ENCODE measurements at regions of chr6 and their contacts with region 1.

Region 1: DNA sequence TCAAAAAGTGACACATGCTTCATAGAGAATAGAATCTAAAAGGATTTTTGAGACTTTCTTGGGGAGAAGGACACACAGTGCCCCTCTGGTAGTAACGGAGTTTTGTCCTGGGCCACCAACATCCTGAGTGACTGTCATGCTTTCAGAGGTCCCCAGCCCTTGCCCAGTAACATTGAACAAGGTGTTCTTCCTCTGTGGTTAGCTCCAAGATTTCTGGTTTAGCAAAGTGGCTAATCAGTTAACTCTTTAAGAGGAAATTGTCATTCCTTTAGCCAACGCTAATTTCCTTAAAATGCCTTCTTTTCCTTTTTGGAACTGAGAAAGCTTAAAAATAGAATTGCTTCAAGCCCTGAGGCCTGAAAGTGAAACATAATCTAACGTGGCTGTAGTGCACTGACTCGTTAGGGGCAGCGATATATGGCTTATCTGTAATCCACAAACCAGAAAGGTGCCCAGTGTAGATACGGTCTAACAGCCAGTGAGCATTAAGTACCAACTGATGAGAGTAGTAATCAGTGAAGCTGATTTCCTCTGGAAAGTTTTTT is 7.8 kb downstream of the E2F3 start:
- DNase-seq: peak; percentile 75
- ATAC-seq: peak; percentile 92
- H3K4me3 ChIP-seq: peak overlapping the region; percentile 56
- H3K27ac ChIP-seq: peak overlapping the region; percentile 82
- H3K4me1 ChIP-seq: peaks cover 29% of the 10 kb centered on the region
- H3K27me3 ChIP-seq: no peaks in the 10 kb centered on the region
- CTCF ChIP-seq: 0 out of 6 replicates have a peak, but pooled peaks of 1 of the 3 experiments have one; percentile 3
- EP300 ChIP-seq: 0 out of 4 replicates have a peak, but pooled peaks of 1 of the 2 experiments have one; percentile 41
- POLR2A ChIP-seq: no peak
- RAD21 ChIP-seq: no peak

Region 2: GRCh38 chr6:20279608-20280287 is 129.8 kb before region 1 on chr6:
- CTCF ChIA-PET with region 1: no interaction called
- POLR2A ChIA-PET with region 1: no interaction called
- RAD21 ChIA-PET with region 1: no interaction called
- SMC1A ChIA-PET with region 1: no interaction called
- in situ Hi-C with region 1: no loop called
- intact Hi-C with region 1: no loop called
- DNase-seq: no peak
- ATAC-seq: no peak
- H3K4me3 ChIP-seq: no peak overlapping the region
- H3K27ac ChIP-seq: no peak overlapping the region
- H3K4me1 ChIP-seq: no peaks in the 10 kb centered on the region
- H3K27me3 ChIP-seq: no peaks in the 10 kb centered on the region
- CTCF ChIP-seq: no peak
- EP300 ChIP-seq: no peak
- POLR2A ChIP-seq: no peak
- RAD21 ChIP-seq: no peak

Region 3: GRCh38 chr6:20467437-20467836 is 57.9 kb after region 1 on chr6:
- CTCF ChIA-PET with region 1: interaction called, 12 read pairs
- POLR2A ChIA-PET with region 1: interaction called, 8 read pairs
- RAD21 ChIA-PET with region 1: interaction called, 12 read pairs
- SMC1A ChIA-PET with region 1: interaction called, 35 read pairs
- in situ Hi-C with region 1: no loop called
- intact Hi-C with region 1: loop called (anchors 2 kb)
- DNase-seq: peak; percentile 50
- ATAC-seq: peak; percentile 63
- H3K4me3 ChIP-seq: no peak overlapping the region
- H3K27ac ChIP-seq: peak overlapping the region; percentile 50
- H3K4me1 ChIP-seq: peaks cover 46% of the 10 kb centered on the region
- H3K27me3 ChIP-seq: no peaks in the 10 kb centered on the region
- CTCF ChIP-seq: no peak
- EP300 ChIP-seq: no peak
- POLR2A ChIP-seq: no peak
- RAD21 ChIP-seq: no peak

Region 4: DNA sequence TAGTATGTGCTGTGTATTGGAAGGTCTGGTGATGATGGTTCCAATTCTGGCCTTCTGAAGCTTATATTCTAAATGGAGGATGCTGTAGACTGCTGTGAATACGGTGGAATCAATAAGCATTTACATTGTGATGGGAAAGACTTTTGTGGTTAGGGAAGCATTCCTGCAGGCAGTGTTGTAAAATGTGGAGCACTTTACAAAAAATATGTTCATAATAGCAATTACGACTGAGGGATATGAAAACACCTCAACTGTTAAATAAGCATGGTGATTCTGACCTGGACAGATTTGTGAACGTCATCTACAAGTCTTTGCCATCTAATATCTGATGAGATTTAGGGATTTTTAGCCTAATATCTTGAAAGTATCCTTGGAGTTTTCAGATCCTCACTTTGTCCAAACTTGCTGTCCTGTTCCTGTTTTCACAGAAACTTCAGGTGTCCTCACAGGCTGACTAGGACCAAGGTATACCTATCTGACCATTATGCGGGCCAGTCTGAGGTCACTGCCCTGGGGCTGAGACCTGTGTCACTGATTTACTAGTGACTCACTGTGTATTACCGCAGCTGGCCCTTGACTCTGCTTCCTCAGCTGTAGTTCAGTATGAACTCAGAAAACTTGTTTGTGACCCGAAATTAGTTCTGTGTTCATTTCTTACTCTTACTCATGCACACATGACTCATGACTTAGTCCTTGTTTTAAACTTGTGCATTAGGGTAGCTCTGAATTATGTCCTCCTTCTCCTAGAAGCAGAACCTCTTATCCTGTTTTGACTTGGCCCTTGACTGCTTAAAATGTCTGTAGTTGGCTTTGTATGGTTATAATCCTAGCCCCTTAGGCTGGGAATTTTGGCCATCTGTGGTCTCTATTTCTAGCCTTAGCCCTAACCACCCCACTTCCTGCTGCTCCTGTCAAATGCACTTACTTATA is 467.8 kb after region 1 on chr6:
- CTCF ChIA-PET with region 1: no interaction called
- POLR2A ChIA-PET with region 1: no interaction called
- RAD21 ChIA-PET with region 1: no interaction called
- SMC1A ChIA-PET with region 1: no interaction called
- in situ Hi-C with region 1: no loop called
- intact Hi-C with region 1: no loop called
- DNase-seq: peak; percentile 89
- ATAC-seq: peak; percentile 98
- H3K4me3 ChIP-seq: no peak overlapping the region
- H3K27ac ChIP-seq: peak overlapping the region; percentile 80
- H3K4me1 ChIP-seq: peaks cover 18% of the 10 kb centered on the region; the same call in 1 of the 2 replicates
- H3K27me3 ChIP-seq: no peaks in the 10 kb centered on the region
- CTCF ChIP-seq: no peak
- EP300 ChIP-seq: peak; percentile 76 to 91
- POLR2A ChIP-seq: no peak
- RAD21 ChIP-seq: no peak